ENCODE measurements at regions of chr11 and their contacts with region 1.

Region 1: DNA sequence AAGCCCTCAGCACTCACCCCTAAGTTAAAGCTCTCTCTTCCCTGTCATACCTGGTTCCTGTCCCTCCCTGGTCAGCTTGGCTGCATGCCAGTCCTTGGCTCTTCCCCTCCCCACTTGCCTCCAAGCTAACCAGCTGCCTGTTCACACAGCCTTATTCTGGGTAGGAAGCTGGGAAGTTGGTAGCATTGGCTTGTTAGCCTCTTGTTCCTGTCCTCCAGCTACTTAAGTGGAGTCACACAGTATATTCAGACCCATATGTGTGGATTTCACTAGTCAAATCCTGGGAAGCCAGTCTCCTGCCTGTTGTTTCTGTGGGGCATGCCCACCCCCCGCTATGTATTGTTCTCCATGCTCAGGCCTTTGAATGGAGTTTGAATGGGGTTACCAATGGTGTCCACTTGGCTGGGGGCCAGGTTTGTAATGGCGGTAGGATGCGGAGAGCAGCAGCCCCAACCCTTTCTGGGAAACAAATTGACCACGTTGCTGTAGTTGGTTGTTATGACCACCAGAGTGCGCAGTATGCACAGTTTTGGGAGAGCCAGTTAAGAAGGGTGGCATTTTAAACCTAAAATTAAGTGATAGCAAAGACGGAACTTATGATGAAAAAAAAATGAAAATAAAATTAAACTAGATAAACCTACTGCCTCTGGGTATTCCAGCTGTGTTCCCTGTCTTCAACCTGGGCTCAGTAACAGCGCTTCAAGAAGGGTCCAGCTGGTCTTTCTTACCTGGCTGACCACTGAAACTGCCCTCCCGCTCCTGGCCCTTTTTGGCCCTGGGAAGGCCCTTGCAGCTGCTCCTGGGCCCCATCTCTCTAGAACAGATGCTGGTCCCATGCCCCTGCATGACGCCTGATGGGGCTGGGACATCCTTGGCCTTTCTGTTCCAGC is 10.7 kb upstream of the RPS3 start:
- DNase-seq: peak; percentile 86
- ATAC-seq: peak; percentile 82
- H3K4me3 Mint-ChIP-seq: no peak overlapping the region
- H3K27ac Mint-ChIP-seq: no peak overlapping the region
- H3K4me1 Mint-ChIP-seq: peaks cover 8% of the 10 kb centered on the region
- H3K27me3 Mint-ChIP-seq: peaks cover 25% of the 10 kb centered on the region

Region 2: DNA sequence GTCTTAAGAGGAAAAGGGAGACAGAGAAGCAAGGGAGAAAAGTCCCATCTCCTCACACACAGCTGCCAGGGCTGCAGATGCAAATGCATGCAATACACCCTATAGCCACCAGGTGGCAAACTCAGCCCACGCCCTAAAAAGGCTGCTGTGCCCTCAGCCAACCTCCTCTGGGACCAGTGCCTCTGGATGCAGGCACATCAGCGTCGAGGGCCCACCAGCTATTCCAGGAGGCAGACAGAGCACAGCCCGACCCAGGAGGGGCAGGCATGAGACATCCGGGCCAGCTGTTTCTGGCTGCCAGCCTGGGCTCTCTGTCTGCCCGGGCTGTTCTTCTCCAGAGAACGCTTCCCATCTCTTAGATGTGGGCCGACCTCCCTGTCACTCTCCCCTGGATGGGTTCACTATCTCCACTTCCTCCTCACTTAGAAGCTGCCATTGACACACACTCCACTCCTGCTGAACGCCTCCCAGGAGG is 108.4 kb before region 1 on chr11:
- CTCF ChIA-PET with region 1: interaction called, 380 read pairs
- DNase-seq: peak; percentile 84
- ATAC-seq: peak; percentile 74
- H3K4me3 Mint-ChIP-seq: no peak overlapping the region
- H3K27ac Mint-ChIP-seq: no peak overlapping the region
- H3K4me1 Mint-ChIP-seq: peaks cover 24% of the 10 kb centered on the region
- H3K27me3 Mint-ChIP-seq: no peaks in the 10 kb centered on the region

Region 3: GRCh38 chr11:75328426-75329277 is 60.0 kb before region 1 on chr11:
- CTCF ChIA-PET with region 1: interaction called, 126 read pairs
- DNase-seq: peak; percentile 88
- ATAC-seq: peak; percentile 93
- H3K4me3 Mint-ChIP-seq: peak overlapping the region; percentile 32
- H3K27ac Mint-ChIP-seq: peak overlapping the region; percentile 86
- H3K4me1 Mint-ChIP-seq: peaks cover 39% of the 10 kb centered on the region
- H3K27me3 Mint-ChIP-seq: no peaks in the 10 kb centered on the region

Region 4: GRCh38 chr11:75351791-75352587 is 36.6 kb before region 1 on chr11:
- CTCF ChIA-PET with region 1: interaction called, 51 read pairs
- DNase-seq: peak; percentile 76
- ATAC-seq: peak; percentile 72
- H3K4me3 Mint-ChIP-seq: peak overlapping the region; percentile 74
- H3K27ac Mint-ChIP-seq: peak overlapping the region; percentile 86
- H3K4me1 Mint-ChIP-seq: peaks cover 48% of the 10 kb centered on the region
- H3K27me3 Mint-ChIP-seq: no peaks in the 10 kb centered on the region

Region 5: GRCh38 chr11:75399344-75400145 is 10.9 kb after region 1 on chr11 and contains the start of gene RPS3:
- CTCF ChIA-PET with region 1: interaction called, 16 read pairs
- DNase-seq: peak; percentile 94
- ATAC-seq: peak; percentile 89
- H3K4me3 Mint-ChIP-seq: peak within 1 kb of the TSS; percentile 98
- H3K27ac Mint-ChIP-seq: peak within 1 kb of the TSS; percentile 99
- H3K4me1 Mint-ChIP-seq: peaks cover 40% of the 10 kb centered on the region
- H3K27me3 Mint-ChIP-seq: peaks cover 4% of the 10 kb centered on the region
- total RNA-seq, gene RPS3: 2,848 to 3,262 TPM

Region 6: DNA sequence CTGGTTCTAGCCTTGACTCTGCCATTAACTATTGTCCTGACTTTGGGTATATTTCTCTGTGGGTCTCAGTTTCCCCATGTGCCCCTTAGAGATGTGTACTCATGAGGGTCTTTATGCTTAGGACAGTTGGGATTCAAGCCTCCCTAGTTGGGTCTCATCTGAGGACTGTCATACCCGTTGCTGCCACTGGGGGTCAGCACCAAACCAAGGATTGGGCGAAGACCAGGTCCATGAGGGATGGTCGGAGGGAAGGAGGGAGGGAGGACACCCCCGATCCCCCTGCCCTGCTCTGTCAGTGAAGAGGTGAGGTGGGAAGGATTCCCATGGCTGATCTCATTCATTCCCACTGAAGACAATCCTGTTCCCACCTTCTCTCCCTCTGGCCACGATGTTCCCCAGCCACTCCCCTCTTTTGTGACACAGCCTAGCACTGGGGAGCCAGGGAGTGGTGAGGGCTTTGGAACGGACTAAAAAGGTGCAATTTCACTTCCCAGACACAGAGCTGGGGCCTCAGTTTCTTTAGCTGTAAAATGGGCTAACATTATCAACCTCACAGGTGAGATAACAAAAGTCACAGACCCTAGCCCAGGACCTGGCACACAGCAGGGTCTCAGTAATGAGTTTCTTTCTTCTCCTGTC is 56.8 kb after region 1 on chr11:
- CTCF ChIA-PET with region 1: interaction called, 13 read pairs
- DNase-seq: peak; percentile 78
- ATAC-seq: peak; percentile 77
- H3K4me3 Mint-ChIP-seq: no peak overlapping the region
- H3K27ac Mint-ChIP-seq: no peak overlapping the region
- H3K4me1 Mint-ChIP-seq: no peaks in the 10 kb centered on the region
- H3K27me3 Mint-ChIP-seq: peaks cover 2% of the 10 kb centered on the region

Region 7: DNA sequence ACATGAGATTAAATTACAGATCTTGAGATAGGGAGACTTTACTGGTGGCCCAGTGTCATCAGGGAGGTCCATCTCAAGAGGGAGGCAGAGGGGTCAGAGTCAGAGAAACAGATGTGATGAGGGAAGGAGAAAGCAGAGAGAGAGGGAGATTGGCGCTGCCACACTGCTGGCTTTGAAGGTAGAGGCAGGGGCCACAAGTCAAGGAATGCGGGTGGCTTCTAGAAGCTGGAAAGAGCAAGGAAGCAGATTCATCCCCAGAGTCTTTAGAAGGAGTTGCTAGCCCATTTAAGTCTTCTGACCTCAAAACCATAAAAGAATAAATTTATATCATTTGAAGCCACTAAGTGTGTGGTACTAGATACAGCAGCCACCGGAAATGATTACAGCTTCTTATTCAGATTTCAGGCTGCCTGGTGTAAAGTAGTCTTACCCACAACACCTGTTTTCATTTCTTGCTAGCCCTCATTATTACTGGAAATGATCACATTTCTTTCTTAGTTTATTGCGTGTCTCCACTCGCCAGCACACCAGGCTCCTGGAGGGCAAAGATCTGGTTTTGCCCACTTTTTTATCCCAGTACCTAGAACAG is 160.8 kb after region 1 on chr11:
- CTCF ChIA-PET with region 1: no interaction called
- DNase-seq: no peak
- ATAC-seq: no peak
- H3K4me3 Mint-ChIP-seq: no peak overlapping the region
- H3K27ac Mint-ChIP-seq: no peak overlapping the region
- H3K4me1 Mint-ChIP-seq: peaks cover 8% of the 10 kb centered on the region
- H3K27me3 Mint-ChIP-seq: peaks cover 11% of the 10 kb centered on the region